Breast epithelium (tissue), 4 donors: ENCODE measurements at regions of chr2 and their contacts with region 1.

Region 1: GRCh38 chr2:68469935-68470334 is 2.5 kb downstream of the APLF start:
- DNase-seq: no peak
- H3K4me3 ChIP-seq: no peak overlapping the region
- H3K27ac ChIP-seq: no peak overlapping the region
- H3K4me1 ChIP-seq: peaks cover 0 to 7% of the 10 kb centered on the region in 2 donors
- H3K27me3 ChIP-seq: no peaks in the 10 kb centered on the region
- CTCF ChIP-seq: no peak
- POLR2A ChIP-seq: no peak

Region 2: GRCh38 chr2:68714866-68715265 is 244.9 kb after region 1 on chr2:
- intact Hi-C with region 1: loop called (anchors 5 kb)
- DNase-seq: no peak
- H3K4me3 ChIP-seq: no peak overlapping the region
- H3K27ac ChIP-seq: no peak overlapping the region
- H3K4me1 ChIP-seq: no peaks in the 10 kb centered on the region
- H3K27me3 ChIP-seq: no peaks in the 10 kb centered on the region
- CTCF ChIP-seq: no peak
- POLR2A ChIP-seq: no peak